Prostate gland (tissue), 2 donors: ENCODE measurements at regions of chr12 and their contacts with region 1.

Region 1: DNA sequence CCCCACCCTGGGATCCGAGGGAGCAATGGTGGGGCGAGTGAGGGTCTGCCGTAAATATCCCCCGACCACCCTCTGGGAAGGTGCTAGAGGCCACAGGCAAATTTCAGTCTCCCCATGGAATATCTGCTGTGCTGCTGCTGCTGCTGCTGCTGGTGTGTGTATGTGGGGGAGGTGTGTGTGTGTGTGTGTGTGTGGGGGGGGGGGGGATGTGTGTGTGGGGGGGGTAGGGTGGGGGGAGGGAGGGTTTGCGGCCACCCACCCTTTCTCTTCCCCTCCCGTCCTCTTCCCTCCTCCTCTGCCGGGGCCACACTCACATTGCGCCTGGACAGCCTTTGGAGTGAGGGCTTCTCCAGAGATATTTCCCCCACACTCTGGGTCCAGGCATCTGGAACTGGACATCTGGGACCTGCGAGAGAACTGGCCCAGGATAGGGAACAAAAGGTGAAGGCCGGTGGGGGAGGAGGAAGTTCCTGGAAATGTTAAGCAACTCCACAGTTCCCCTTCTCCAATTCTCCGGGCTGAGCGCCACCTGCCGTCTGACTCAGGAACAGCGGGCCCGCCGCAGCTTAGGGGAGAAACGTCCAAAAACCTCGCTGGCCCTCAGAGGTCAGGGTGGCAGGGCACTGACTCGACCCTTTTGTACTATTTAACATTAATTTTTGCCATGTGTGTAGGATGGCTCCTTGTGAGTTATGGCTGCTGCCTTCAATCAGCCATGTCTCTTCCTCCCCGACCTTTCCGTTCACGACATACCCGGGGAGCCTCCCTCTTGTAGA is at the start of gene C1RL:
- DNase-seq: peak; percentile 82
- H3K4me3 ChIP-seq: peak within 1 kb of the TSS; percentile 45 to 54
- H3K27ac ChIP-seq: peak within 1 kb of the TSS; percentile 77 to 89
- H3K4me1 ChIP-seq: no peaks in the 10 kb centered on the region
- H3K27me3 ChIP-seq: no peaks in the 10 kb centered on the region
- CTCF ChIP-seq: peak; percentile 96 to 98 (median 97)
- POLR2A ChIP-seq: peak; percentile 29
- total RNA-seq, gene C1RL: 48.2 to 86.2 TPM

Region 2: GRCh38 chr12:6944381-6945186 is 164.4 kb before region 1 on chr12:
- intact Hi-C with region 1: loop called (anchors 5 kb)
- DNase-seq: peak; percentile 95
- H3K4me3 ChIP-seq: peak overlapping the region; percentile 58 to 67
- H3K27ac ChIP-seq: peak overlapping the region; percentile 94 to 97
- H3K4me1 ChIP-seq: peaks cover 18% of the 10 kb centered on the region
- H3K27me3 ChIP-seq: no peaks in the 10 kb centered on the region
- CTCF ChIP-seq: peak; percentile 81 to 97 (median 95)
- POLR2A ChIP-seq: peak; percentile 52

Region 3: GRCh38 chr12:7060353-7060954 is 48.5 kb before region 1 on chr12 and contains the start of gene C1S:
- intact Hi-C with region 1: loop called (anchors 2 kb)
- DNase-seq: peak; percentile 61
- H3K4me3 ChIP-seq: peak within 1 kb of the TSS; percentile 15 to 17
- H3K27ac ChIP-seq: peak within 1 kb of the TSS; percentile 57 to 59
- H3K4me1 ChIP-seq: no peaks in the 10 kb centered on the region
- H3K27me3 ChIP-seq: no peaks in the 10 kb centered on the region
- CTCF ChIP-seq: peak; percentile 42 to 90 (median 78)
- POLR2A ChIP-seq: no peak
- total RNA-seq, gene C1S: 52.7 to 176 TPM

Region 4: DNA sequence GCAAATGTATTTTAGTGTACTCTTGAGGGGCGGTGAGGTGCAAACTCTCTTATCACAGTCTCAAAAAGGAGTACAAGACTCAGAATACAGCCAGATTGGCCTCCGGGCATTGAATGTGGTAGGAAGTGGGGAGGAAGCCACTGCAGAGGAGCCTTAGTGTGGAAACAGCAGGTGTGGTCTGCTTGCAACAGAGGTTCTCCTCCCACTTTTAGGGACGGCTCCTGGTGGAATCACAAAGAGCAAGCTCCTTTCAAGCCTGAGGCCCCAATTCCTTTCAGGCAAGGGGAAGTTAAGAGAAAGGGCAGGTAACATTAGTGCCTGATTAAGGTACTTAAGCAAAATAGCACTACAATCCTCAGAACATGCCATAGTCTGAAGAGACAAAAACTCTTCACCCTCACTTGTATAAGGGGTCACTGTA is 850.7 kb after region 1 on chr12:
- intact Hi-C with region 1: no loop called
- DNase-seq: no peak
- H3K4me3 ChIP-seq: no peak overlapping the region
- H3K27ac ChIP-seq: no peak overlapping the region
- H3K4me1 ChIP-seq: no peaks in the 10 kb centered on the region
- H3K27me3 ChIP-seq: no peaks in the 10 kb centered on the region
- CTCF ChIP-seq: no peak
- POLR2A ChIP-seq: no peak